ENCODE measurements at regions of chr2 and their contacts with region 1.

Region 1: GRCh38 chr2:115174651-115175050 is 732.2 kb downstream of the DPP10 start:
- DNase-seq: no peak
- ATAC-seq: no peak
- H3K4me3 ChIP-seq: no peak overlapping the region
- H3K27ac ChIP-seq: no peak overlapping the region
- H3K4me1 ChIP-seq: no peaks in the 10 kb centered on the region
- H3K27me3 ChIP-seq: no peaks in the 10 kb centered on the region
- CTCF ChIP-seq: no peak

Region 2: DNA sequence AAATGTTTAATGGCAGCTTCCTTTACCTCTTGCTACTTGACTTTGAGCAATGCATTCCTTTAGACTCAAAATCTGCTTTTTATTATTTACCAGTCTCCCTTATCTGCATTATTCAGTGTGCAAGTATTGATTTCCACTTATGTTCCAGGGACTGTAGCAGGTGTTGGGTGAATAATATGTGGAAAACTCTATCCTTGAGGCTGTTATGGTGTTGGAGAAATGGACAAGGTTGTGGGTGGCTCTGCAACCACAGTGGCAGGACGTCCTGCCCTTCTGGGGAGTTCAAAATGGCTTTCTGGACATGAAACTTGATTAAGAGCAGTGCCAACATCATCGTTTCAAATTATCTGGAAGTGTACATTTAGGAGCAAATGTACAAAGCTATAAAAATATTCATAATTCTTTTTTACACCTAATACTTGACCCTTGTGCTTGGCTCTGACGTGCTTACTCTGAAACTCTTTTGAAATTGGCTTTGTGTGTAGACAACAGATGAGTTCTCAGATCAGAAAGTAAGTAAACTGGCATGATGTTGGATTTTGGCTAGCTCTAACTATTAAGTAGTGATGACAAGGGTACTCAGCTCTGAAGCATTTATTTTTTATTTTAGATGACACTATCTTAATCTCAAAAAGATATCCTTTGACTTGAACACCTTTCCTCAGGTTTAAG is 34.0 kb after region 1 on chr2:
- intact Hi-C with region 1: loop called in 1 of 10 experiments (anchors 1 kb)
- DNase-seq: no peak
- ATAC-seq: no peak
- H3K4me3 ChIP-seq: no peak overlapping the region
- H3K27ac ChIP-seq: no peak overlapping the region
- H3K4me1 ChIP-seq: no peaks in the 10 kb centered on the region
- H3K27me3 ChIP-seq: no peaks in the 10 kb centered on the region
- CTCF ChIP-seq: no peak

Measured in heart right ventricle (tissue), 16 donors.